Mammary epithelial cell (primary cell): ENCODE measurements at regions of chr10 and their contacts with region 1.

Region 1: DNA sequence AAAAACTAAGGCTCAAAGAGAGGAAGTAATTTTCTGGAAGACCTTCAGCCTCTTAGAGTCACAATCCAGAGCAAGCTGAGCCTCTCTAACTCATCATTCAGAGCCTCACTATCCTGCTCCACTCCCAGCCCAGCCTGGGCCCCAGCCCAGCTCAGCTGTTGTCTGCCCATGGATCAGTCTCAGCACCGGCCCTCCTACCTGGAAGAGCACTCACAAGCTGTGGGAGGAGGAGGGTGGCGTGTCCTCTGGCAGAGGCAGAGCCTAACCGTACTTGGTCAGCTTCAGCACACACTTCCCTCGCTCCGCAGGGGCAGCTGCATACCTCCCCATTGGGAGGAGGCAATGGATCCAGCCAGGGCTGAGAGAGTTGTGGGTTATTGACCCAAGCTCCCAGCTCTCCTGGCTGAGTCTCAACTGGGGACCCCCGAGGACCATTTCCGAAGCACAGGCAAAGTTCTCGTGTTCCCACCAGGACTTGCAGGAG is 66.7 kb upstream of the GPR26 start:
- DNase-seq: no peak
- H3K4me3 ChIP-seq: no peak overlapping the region
- H3K27ac ChIP-seq: no peak overlapping the region
- H3K4me1 ChIP-seq: no peaks in the 10 kb centered on the region
- H3K27me3 ChIP-seq: no peaks in the 10 kb centered on the region
- CTCF ChIP-seq: no peak

Region 2: DNA sequence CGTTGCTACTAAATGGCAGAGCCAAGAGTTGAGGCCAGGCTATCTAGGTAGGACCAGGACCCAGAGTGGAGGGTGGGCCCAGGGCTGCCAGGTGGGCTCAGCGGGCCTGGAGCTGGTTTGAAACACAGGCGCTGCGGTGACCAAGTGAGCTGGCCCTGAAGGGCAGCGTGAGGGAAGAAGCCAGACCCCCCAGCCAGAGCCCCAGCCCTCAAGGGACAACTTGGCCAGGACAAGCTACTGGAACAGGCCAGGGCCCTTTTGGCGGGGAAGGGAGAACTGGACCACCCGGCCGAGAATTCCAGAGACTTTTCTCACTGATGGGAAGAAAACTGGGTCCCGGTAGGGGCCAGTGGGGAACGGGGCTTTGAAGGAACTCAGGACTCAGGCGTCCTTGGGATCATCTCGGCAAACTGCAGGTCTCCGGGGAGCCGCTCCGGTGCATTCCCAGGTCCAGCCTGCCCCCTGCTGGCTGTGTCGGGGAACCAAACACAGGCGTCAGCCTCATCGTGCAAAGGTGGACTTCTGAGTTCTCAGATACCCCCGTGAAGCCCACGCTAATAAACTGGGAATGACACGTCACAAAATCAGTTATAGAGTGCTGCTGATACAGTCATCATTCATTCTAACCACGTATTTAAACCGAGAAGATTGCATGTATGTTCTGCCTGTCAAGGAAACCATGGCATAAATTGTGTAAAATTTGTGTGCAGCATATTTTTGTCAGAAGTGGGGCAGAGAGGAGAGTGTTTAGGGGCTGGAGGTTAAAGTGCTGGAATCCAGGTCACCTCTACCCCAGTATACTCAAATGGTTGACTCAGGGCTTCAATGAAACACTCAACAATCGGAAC is 368.2 kb after region 1 on chr10:
- CTCF ChIA-PET with region 1: no interaction called
- dilution Hi-C with region 1: loop called (anchors 5 kb)
- in situ Hi-C with region 1: no loop called
- intact Hi-C with region 1: no loop called
- DNase-seq: peak; percentile 16
- H3K4me3 ChIP-seq: no peak overlapping the region
- H3K27ac ChIP-seq: no peak overlapping the region
- H3K4me1 ChIP-seq: no peaks in the 10 kb centered on the region
- H3K27me3 ChIP-seq: peaks cover 5% of the 10 kb centered on the region
- CTCF ChIP-seq: peak; percentile 80 to 97